ENCODE measurements at regions of chr4 and their contacts with region 1.

Region 1: GRCh38 chr4:123102897-123103471 is 180.6 kb upstream of the NUDT6 start:
- DNase-seq: peak; percentile 69
- H3K4me3 ChIP-seq: no peak overlapping the region
- H3K27ac ChIP-seq: no peak overlapping the region
- H3K4me1 ChIP-seq: peaks cover 18% of the 10 kb centered on the region
- H3K27me3 ChIP-seq: no peaks in the 10 kb centered on the region
- CTCF ChIP-seq: peak; percentile 82

Region 2: DNA sequence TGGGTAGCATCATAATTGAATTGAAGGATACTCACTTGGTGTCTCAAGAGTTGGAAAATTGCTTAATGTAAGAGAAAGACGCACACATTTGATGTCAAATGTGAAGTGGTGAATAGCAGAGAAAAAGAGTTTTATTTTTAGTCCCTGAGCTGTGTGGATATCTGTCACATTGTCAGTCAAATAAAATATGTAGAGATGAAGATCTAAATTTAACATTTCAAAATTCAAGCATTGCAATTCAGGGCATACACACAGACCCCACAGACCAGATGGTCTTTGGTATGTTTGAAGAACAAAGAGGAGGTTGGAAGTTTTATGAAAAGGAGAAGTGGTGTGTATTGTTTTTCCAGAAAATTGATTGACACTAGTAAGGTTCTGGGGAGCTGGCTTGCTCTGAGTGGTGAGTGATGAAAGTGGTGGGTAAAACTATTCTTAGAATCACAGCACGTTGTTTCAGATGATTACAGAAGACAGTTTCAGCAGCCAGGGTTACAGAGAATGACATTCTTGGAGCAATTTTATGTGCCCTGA is 415.4 kb before region 1 on chr4:
- CTCF ChIA-PET with region 1: no interaction called
- POLR2A ChIA-PET with region 1: no interaction called
- intact Hi-C with region 1: no loop called
- DNase-seq: no peak
- H3K4me3 ChIP-seq: no peak overlapping the region
- H3K27ac ChIP-seq: no peak overlapping the region
- H3K4me1 ChIP-seq: no peaks in the 10 kb centered on the region
- H3K27me3 ChIP-seq: no peaks in the 10 kb centered on the region
- CTCF ChIP-seq: no peak

Region 3: DNA sequence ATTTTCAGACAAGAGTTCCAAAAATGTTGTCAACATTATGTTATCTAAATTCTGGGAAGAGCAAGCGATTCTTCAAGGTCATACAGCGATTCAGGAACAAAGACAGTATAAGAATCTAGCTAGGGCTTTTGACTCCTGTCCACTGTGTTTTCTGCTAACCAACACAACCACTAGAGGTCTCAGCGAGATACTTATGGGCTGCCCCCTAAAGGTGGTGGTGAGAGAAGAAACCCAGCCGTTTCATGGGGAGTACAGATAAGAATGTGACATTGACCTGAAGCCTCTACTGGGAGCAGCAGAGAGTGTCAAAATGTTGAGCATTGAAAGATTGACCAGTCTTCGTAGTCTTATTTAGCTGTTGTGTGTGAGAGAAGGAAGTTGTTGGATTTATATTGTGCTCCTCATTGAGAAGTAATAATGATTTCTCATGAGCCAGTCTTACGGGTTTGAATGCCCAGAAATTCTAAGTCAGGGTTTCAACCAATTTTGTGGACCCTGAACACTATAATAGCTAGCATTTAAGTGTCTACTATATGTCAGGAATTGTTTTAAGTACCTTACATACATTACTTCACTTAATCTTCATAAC is 461.9 kb after region 1 on chr4:
- CTCF ChIA-PET with region 1: no interaction called
- POLR2A ChIA-PET with region 1: no interaction called
- intact Hi-C with region 1: loop called (anchors 5 kb)
- DNase-seq: peak; percentile 85
- H3K4me3 ChIP-seq: no peak overlapping the region
- H3K27ac ChIP-seq: no peak overlapping the region
- H3K4me1 ChIP-seq: no peaks in the 10 kb centered on the region
- H3K27me3 ChIP-seq: no peaks in the 10 kb centered on the region
- CTCF ChIP-seq: peak; percentile 97

Region 4: GRCh38 chr4:123661080-123661737 is 558.2 kb after region 1 on chr4:
- CTCF ChIA-PET with region 1: no interaction called
- POLR2A ChIA-PET with region 1: no interaction called
- intact Hi-C with region 1: loop called (anchors 5 kb)
- DNase-seq: peak; percentile 46
- H3K4me3 ChIP-seq: no peak overlapping the region
- H3K27ac ChIP-seq: no peak overlapping the region
- H3K4me1 ChIP-seq: peaks cover 7% of the 10 kb centered on the region
- H3K27me3 ChIP-seq: no peaks in the 10 kb centered on the region
- CTCF ChIP-seq: peak; percentile 68

Region 5: GRCh38 chr4:123767806-123768205 is 664.8 kb after region 1 on chr4:
- CTCF ChIA-PET with region 1: no interaction called
- POLR2A ChIA-PET with region 1: no interaction called
- intact Hi-C with region 1: loop called (anchors 10 kb)
- DNase-seq: no peak
- H3K4me3 ChIP-seq: no peak overlapping the region
- H3K27ac ChIP-seq: no peak overlapping the region
- H3K4me1 ChIP-seq: no peaks in the 10 kb centered on the region
- H3K27me3 ChIP-seq: no peaks in the 10 kb centered on the region
- CTCF ChIP-seq: no peak